GM12878 (cell line): ENCODE measurements at regions of chr22 and their contacts with region 1.

Region 1: GRCh38 chr22:22422629-22423112 is 85.9 kb downstream of the ZNF280B start:
- DNase-seq: peak; percentile 85
- ATAC-seq: peak; percentile 100
- H3K4me3 ChIP-seq: no peak overlapping the region
- H3K27ac ChIP-seq: no peak overlapping the region
- H3K4me1 ChIP-seq: no peaks in the 10 kb centered on the region
- H3K27me3 ChIP-seq: no peaks in the 10 kb centered on the region
- CTCF ChIP-seq: peak; percentile 55 to 72 (median 62)
- EP300 ChIP-seq: 0 out of 4 replicates have a peak, but pooled peaks have one; percentile 27 to 30
- POLR2A ChIP-seq: no peak
- RAD21 ChIP-seq: peak; percentile 48

Region 2: DNA sequence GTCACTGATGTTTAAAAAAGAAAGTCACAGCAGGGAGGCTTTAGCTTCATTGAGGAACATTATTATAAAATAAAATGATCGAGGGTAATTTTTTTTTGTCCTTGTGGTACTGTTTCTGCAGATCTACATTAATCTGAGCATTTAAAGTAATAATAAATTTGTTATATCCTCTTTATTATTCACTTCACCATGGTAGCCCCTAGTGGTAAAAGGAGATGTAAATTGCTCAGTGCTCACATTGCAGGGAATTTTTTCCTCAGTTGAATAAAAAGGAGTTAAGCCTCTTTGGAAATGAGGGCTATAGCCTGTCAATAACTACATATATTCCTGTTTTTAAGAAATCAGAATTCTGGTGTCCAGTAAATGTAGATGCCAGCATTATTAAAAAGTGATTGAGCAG is 277.8 kb before region 1 on chr22:
- CTCF ChIA-PET with region 1: no interaction called
- POLR2A ChIA-PET with region 1: no interaction called
- RAD21 ChIA-PET with region 1: no interaction called
- SMC1A ChIA-PET with region 1: no interaction called
- in situ Hi-C with region 1: no loop called
- intact Hi-C with region 1: no loop called
- DNase-seq: no peak
- ATAC-seq: no peak
- H3K4me3 ChIP-seq: no peak overlapping the region
- H3K27ac ChIP-seq: no peak overlapping the region
- H3K4me1 ChIP-seq: no peaks in the 10 kb centered on the region
- H3K27me3 ChIP-seq: no peaks in the 10 kb centered on the region
- CTCF ChIP-seq: peak in 1 of 3 experiments; percentile 12; a peak in 1 of 6 replicates
- EP300 ChIP-seq: no peak
- POLR2A ChIP-seq: no peak
- RAD21 ChIP-seq: no peak

Region 3: GRCh38 chr22:22342697-22343580 is 79.7 kb before region 1 on chr22:
- CTCF ChIA-PET with region 1: interaction called, 10 read pairs
- POLR2A ChIA-PET with region 1: no interaction called
- RAD21 ChIA-PET with region 1: interaction called, 3 read pairs
- SMC1A ChIA-PET with region 1: interaction called, 3 read pairs
- in situ Hi-C with region 1: no loop called
- intact Hi-C with region 1: no loop called
- DNase-seq: no peak
- ATAC-seq: peak; percentile 91
- H3K4me3 ChIP-seq: no peak overlapping the region
- H3K27ac ChIP-seq: no peak overlapping the region
- H3K4me1 ChIP-seq: peaks cover 9% of the 10 kb centered on the region; the same call in 1 of the 2 replicates
- H3K27me3 ChIP-seq: no peaks in the 10 kb centered on the region
- CTCF ChIP-seq: peak; percentile 59 to 82 (median 77)
- EP300 ChIP-seq: no peak
- POLR2A ChIP-seq: no peak
- RAD21 ChIP-seq: peak; percentile 44

Region 4: GRCh38 chr22:22408731-22409696 is 13.7 kb before region 1 on chr22:
- CTCF ChIA-PET with region 1: interaction called, 33 read pairs
- POLR2A ChIA-PET with region 1: no interaction called
- RAD21 ChIA-PET with region 1: interaction called, 18 read pairs
- SMC1A ChIA-PET with region 1: interaction called, 6 read pairs
- in situ Hi-C with region 1: no loop called
- intact Hi-C with region 1: no loop called
- DNase-seq: no peak
- ATAC-seq: peak; percentile 95
- H3K4me3 ChIP-seq: no peak overlapping the region
- H3K27ac ChIP-seq: no peak overlapping the region
- H3K4me1 ChIP-seq: no peaks in the 10 kb centered on the region; the same call in 1 of the 2 replicates
- H3K27me3 ChIP-seq: no peaks in the 10 kb centered on the region
- CTCF ChIP-seq: peak; percentile 40 to 59 (median 48)
- EP300 ChIP-seq: no peak
- POLR2A ChIP-seq: no peak
- RAD21 ChIP-seq: peak; percentile 41; the same call in 1 of the 2 replicates

Region 5: GRCh38 chr22:22463855-22464540 is 41.3 kb after region 1 on chr22:
- CTCF ChIA-PET with region 1: interaction called, 75 read pairs
- POLR2A ChIA-PET with region 1: no interaction called
- RAD21 ChIA-PET with region 1: interaction called, 8 read pairs
- SMC1A ChIA-PET with region 1: interaction called, 10 read pairs
- in situ Hi-C with region 1: no loop called
- intact Hi-C with region 1: loop called (anchors 5 kb)
- DNase-seq: no peak
- ATAC-seq: peak; percentile 71
- H3K4me3 ChIP-seq: no peak overlapping the region
- H3K27ac ChIP-seq: no peak overlapping the region
- H3K4me1 ChIP-seq: no peaks in the 10 kb centered on the region
- H3K27me3 ChIP-seq: no peaks in the 10 kb centered on the region
- CTCF ChIP-seq: peak; percentile 27 to 63 (median 55); a peak in 5 of 6 replicates
- EP300 ChIP-seq: no peak
- POLR2A ChIP-seq: no peak
- RAD21 ChIP-seq: peak; percentile 68